HEK293T (cell line): ENCODE measurements at regions of chr17 and their contacts with region 1.

Region 1: GRCh38 chr17:48024937-48025906 is 12.4 kb downstream of the COPZ2 start:
- DNase-seq: peak; percentile 98

Region 2: DNA sequence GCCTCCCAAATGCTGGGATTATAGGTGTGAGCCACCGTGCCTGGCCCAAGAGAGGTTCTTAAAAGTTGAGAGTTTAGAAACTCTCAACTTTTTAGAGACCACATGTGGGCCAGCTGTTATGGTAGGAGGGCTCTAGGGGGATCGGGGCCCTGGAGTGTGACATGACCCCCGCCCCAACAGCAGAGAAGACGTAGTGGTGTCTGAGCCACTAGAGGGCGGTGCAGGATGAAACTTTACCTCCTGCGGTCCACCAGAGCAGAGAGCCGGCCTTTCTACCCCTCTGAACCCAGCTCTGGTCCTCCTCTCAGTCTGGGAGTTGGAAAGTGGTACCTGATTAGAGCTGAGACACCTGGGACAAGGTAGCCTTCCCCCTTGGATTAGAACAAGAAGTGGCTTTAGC is 46.9 kb before region 1 on chr17:
- CTCF ChIA-PET with region 1: interaction called, 10 read pairs
- POLR2A ChIA-PET with region 1: interaction called, 4 read pairs
- DNase-seq: peak; percentile 83

Region 3: GRCh38 chr17:48047741-48048383 is 22.6 kb after region 1 on chr17 and contains the start of gene NFE2L1:
- CTCF ChIA-PET with region 1: interaction called, 7 read pairs
- POLR2A ChIA-PET with region 1: interaction called, 121 read pairs
- DNase-seq: peak; percentile 97

Region 4: DNA sequence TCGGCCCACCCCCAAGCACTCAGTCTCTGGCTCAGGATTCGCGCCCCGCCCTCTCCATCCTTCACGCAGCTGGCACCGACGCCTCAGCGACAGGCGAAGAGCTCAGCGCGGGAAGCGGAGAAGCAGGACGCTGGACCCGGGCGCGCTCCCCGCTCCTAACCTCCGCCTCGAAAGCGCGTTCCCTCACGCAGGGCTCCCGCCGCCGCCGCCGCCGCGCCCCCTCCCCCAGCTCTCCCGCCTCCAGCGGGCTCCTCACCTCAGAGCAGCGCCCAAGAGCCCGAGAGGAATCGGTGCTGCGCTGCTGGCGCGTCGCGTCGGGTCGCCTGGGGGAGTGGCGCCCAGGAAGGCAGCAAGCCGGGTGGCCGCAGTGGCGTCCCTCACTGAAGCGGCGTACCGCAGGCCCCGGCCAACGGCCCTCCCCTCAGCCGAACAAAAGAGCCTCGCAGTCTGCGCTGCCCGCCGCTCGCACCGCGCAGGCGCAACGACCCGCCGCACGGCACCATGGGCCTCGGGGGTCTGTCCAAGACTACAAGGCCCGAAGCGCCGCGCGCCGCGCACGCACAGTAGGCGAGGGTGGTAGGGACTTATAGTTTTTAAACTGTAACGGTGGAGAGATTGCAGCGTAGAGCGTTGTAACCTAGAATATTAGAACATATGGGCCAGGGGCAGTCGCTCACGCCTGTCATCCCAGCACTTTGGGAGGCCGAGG is 75.9 kb after region 1 on chr17 and contains the start of gene CBX1:
- CTCF ChIA-PET with region 1: interaction called, 15 read pairs
- POLR2A ChIA-PET with region 1: interaction called, 6 read pairs
- DNase-seq: peak; percentile 95